HAP-1 (cell line): ENCODE measurements at regions of chr19 and their contacts with region 1.

Region 1: DNA sequence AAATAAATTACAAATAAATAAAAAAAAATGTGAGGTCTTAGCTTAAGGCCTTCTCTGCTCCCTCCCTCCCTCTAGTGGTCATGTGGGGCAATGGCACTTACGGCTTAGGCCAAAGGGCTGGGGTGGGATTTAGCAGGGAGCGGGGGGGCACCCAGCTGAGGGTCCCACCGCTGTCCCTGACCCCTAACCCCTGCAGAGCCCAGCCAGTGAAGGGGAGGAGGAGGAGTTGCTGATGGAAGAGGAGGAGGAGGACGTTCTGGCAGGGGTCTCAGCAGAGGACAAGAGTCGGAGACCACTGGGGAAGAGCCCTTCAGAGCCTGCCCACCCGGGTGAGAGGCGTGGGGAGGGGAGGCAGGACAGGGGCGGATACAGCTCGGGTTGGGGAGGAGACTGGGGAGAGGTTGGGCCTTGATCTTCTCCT is 9.3 kb downstream of the MPND start:
- DNase-seq: peak in 1 of 2 experiments; percentile 76
- H3K4me3 ChIP-seq: no peak overlapping the region
- H3K4me1 ChIP-seq: no peaks in the 10 kb centered on the region
- H3K27me3 ChIP-seq: no peaks in the 10 kb centered on the region

Region 2: DNA sequence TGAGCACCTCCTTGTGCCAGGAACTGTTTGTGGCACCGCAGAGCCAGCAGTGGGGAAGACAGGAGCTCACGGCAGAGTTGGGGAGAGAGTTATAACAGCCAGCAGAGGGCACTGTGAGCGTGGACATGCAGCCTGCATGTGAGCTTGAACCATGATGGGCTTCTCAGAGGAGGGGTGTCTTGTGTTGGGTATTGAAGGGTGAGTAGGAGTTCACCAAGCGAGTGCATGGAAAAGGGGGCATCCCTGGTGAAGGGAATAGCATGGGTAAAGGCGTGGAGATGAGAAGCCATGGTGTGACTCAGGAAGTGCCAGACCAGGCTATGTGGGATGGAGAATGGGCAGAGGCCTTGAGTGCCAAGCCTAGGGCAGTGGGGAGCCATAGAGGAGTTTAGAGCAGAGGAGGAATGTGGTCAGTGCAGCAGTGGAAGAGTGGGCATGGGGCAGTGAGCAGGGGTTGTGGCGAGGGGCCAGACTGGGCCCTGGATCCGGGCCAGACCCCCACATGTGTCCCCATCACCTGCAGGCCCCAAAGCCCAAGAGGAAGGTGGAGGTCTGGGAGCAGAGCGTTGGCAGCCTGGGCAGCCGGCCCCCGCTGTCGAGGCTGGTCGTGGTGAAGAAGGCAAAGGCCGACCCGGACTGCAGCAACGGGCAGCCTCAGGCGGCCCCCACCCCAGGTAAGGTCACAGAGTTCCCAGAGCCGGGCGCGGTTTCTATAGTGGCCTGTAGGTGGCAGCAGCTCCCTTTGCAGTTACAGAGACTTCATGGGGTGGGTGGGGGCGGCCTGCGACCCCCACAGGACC is 85.4 kb before region 1 on chr19:
- in situ Hi-C with region 1: loop called (anchors 5 kb)
- DNase-seq: peak; percentile 54 to 82
- H3K4me3 ChIP-seq: no peak overlapping the region
- H3K4me1 ChIP-seq: no peaks in the 10 kb centered on the region
- H3K27me3 ChIP-seq: no peaks in the 10 kb centered on the region

Region 3: GRCh38 chr19:4284176-4284958 is 68.3 kb before region 1 on chr19:
- in situ Hi-C with region 1: no loop called
- DNase-seq: peak; percentile 65 to 88
- H3K4me3 ChIP-seq: peak overlapping the region; percentile 6; the same call in 1 of the 2 replicates
- H3K4me1 ChIP-seq: no peaks in the 10 kb centered on the region
- H3K27me3 ChIP-seq: peaks cover 47% of the 10 kb centered on the region